B cell (primary cell): ENCODE measurements at regions of chr10 and their contacts with region 1.

Region 1: DNA sequence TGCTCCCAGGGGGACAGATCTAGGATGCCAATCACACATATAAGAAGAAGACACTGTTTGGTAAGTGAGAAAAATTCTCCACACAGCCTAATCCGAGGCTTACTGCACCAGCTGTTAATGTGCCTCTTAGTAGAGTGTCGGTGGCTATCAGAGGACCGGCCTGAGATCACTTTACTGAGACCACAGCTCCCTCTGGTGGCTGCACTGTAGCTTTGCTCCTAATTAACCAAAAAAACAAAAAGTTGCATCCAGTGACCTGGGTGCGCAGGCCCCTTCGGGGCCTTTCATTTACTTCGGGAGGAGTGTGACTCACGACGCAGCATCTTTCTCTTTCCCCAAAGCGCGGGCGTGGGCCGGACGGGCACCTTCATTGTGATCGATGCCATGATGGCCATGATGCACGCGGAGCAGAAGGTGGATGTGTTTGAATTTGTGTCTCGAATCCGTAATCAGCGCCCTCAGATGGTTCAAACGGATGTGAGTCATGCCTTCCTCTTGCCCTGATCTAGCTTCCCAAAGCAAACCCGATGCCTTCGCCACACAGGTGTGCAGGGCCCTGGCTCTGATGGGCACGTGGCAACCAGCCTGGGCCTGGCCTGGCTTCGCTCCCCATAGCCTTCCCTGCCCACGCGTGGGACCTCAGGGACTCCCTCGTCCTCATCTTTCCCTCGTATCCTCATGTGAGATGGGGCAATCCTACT is 56.7 kb downstream of the MKI67 start:
- DNase-seq: peak; percentile 88
- ATAC-seq: no peak
- H3K4me3 ChIP-seq: no peak overlapping the region
- H3K4me3 Mint-ChIP-seq: no peak overlapping the region
- H3K27ac ChIP-seq: no peak overlapping the region
- H3K27ac Mint-ChIP-seq: peak overlapping the region; percentile 34
- H3K4me1 ChIP-seq: peaks cover 19 to 33% of the 10 kb centered on the region in 2 donors
- H3K4me1 Mint-ChIP-seq: peaks cover 33% of the 10 kb centered on the region
- H3K27me3 ChIP-seq: no peaks in the 10 kb centered on the region
- H3K27me3 Mint-ChIP-seq: no peaks in the 10 kb centered on the region
- CTCF ChIP-seq: peak; percentile 91

Region 2: GRCh38 chr10:127715782-127716378 is 353.6 kb before region 1 on chr10:
- CTCF ChIA-PET with region 1: interaction called, 25 read pairs
- POLR2A ChIA-PET with region 1: no interaction called
- intact Hi-C with region 1: loop called (anchors 2 kb)
- DNase-seq: peak; percentile 47
- ATAC-seq: no peak
- H3K4me3 ChIP-seq: no peak overlapping the region
- H3K4me3 Mint-ChIP-seq: no peak overlapping the region
- H3K27ac ChIP-seq: no peak overlapping the region
- H3K27ac Mint-ChIP-seq: no peak overlapping the region
- H3K4me1 ChIP-seq: no peaks in the 10 kb centered on the region
- H3K4me1 Mint-ChIP-seq: no peaks in the 10 kb centered on the region
- H3K27me3 ChIP-seq: no peaks in the 10 kb centered on the region
- H3K27me3 Mint-ChIP-seq: peaks cover 15% of the 10 kb centered on the region
- CTCF ChIP-seq: peak; percentile 58

Region 3: GRCh38 chr10:127906548-127907377 is 162.7 kb before region 1 on chr10 and contains the start of gene PTPRE:
- CTCF ChIA-PET with region 1: interaction called, 56 read pairs
- POLR2A ChIA-PET with region 1: no interaction called
- intact Hi-C with region 1: loop called (anchors 1 kb)
- DNase-seq: peak; percentile 78
- ATAC-seq: peak; percentile 95
- H3K4me3 ChIP-seq: peak within 1 kb of the TSS in 3 of 5 experiments; percentile 42 to 62 (median 49)
- H3K4me3 Mint-ChIP-seq: peak within 1 kb of the TSS; percentile 49
- H3K27ac ChIP-seq: no peak within 1 kb of the TSS
- H3K27ac Mint-ChIP-seq: no peak within 1 kb of the TSS
- H3K4me1 ChIP-seq: peaks cover 8 to 9% of the 10 kb centered on the region in 2 donors
- H3K4me1 Mint-ChIP-seq: no peaks in the 10 kb centered on the region
- H3K27me3 ChIP-seq: peaks cover 0 to 30% (median 12%) of the 10 kb centered on the region in 4 experiments
- H3K27me3 Mint-ChIP-seq: peaks cover 57% of the 10 kb centered on the region
- CTCF ChIP-seq: peak; percentile 74
- total RNA-seq, gene PTPRE: 31.5 and 32.7 TPM in 2 replicates

Region 4: GRCh38 chr10:128011175-128011979 is 58.1 kb before region 1 on chr10:
- CTCF ChIA-PET with region 1: interaction called, 55 read pairs
- POLR2A ChIA-PET with region 1: no interaction called
- intact Hi-C with region 1: loop called (anchors 1 kb)
- DNase-seq: peak; percentile 90
- ATAC-seq: peak; percentile 99
- H3K4me3 ChIP-seq: no peak overlapping the region
- H3K4me3 Mint-ChIP-seq: peak overlapping the region; percentile 58
- H3K27ac ChIP-seq: no peak overlapping the region
- H3K27ac Mint-ChIP-seq: peak overlapping the region; percentile 54
- H3K4me1 ChIP-seq: peaks cover 4 to 10% of the 10 kb centered on the region in 2 donors
- H3K4me1 Mint-ChIP-seq: peaks cover 10% of the 10 kb centered on the region
- H3K27me3 ChIP-seq: peaks cover 0 to 14% (median 0%) of the 10 kb centered on the region in 4 experiments
- H3K27me3 Mint-ChIP-seq: peaks cover 28% of the 10 kb centered on the region
- CTCF ChIP-seq: peak; percentile 97

Region 5: GRCh38 chr10:128035557-128035973 is 33.9 kb before region 1 on chr10:
- CTCF ChIA-PET with region 1: interaction called, 524 read pairs
- POLR2A ChIA-PET with region 1: interaction called, 7 read pairs
- intact Hi-C with region 1: loop called (anchors 1 kb)
- DNase-seq: peak; percentile 64
- ATAC-seq: peak; percentile 83
- H3K4me3 ChIP-seq: no peak overlapping the region
- H3K4me3 Mint-ChIP-seq: no peak overlapping the region
- H3K27ac ChIP-seq: no peak overlapping the region
- H3K27ac Mint-ChIP-seq: peak overlapping the region; percentile 41
- H3K4me1 ChIP-seq: no peaks in the 10 kb centered on the region
- H3K4me1 Mint-ChIP-seq: no peaks in the 10 kb centered on the region
- H3K27me3 ChIP-seq: no peaks in the 10 kb centered on the region
- H3K27me3 Mint-ChIP-seq: no peaks in the 10 kb centered on the region
- CTCF ChIP-seq: peak; percentile 80

Region 6: GRCh38 chr10:128125944-128126764 is 56.7 kb after region 1 on chr10 and contains the start of gene MKI67:
- CTCF ChIA-PET with region 1: interaction called, 4 read pairs
- POLR2A ChIA-PET with region 1: no interaction called
- intact Hi-C with region 1: loop called (anchors 1 kb)
- DNase-seq: peak; percentile 94
- ATAC-seq: peak; percentile 94
- H3K4me3 ChIP-seq: peak within 1 kb of the TSS; percentile 60 to 96 (median 73)
- H3K4me3 Mint-ChIP-seq: peak within 1 kb of the TSS; percentile 89
- H3K27ac ChIP-seq: peak within 1 kb of the TSS; percentile 72 to 74
- H3K27ac Mint-ChIP-seq: peak within 1 kb of the TSS; percentile 66
- H3K4me1 ChIP-seq: peaks cover 18 to 23% of the 10 kb centered on the region in 2 donors
- H3K4me1 Mint-ChIP-seq: peaks cover 29% of the 10 kb centered on the region
- H3K27me3 ChIP-seq: peaks cover 0 to 23% (median 19%) of the 10 kb centered on the region in 4 experiments
- H3K27me3 Mint-ChIP-seq: peaks cover 27% of the 10 kb centered on the region
- CTCF ChIP-seq: no peak
- total RNA-seq, gene MKI67: 0.47 and 0.58 TPM in 2 replicates

Region 7: GRCh38 chr10:128286762-128287500 is 217.4 kb after region 1 on chr10:
- CTCF ChIA-PET with region 1: no interaction called
- POLR2A ChIA-PET with region 1: no interaction called
- intact Hi-C with region 1: no loop called
- DNase-seq: no peak
- ATAC-seq: no peak
- H3K4me3 ChIP-seq: no peak overlapping the region
- H3K4me3 Mint-ChIP-seq: no peak overlapping the region
- H3K27ac ChIP-seq: no peak overlapping the region
- H3K27ac Mint-ChIP-seq: no peak overlapping the region
- H3K4me1 ChIP-seq: no peaks in the 10 kb centered on the region
- H3K4me1 Mint-ChIP-seq: no peaks in the 10 kb centered on the region
- H3K27me3 ChIP-seq: peaks cover 0 to 16% (median 0%) of the 10 kb centered on the region in 4 experiments
- H3K27me3 Mint-ChIP-seq: peaks cover 54% of the 10 kb centered on the region
- CTCF ChIP-seq: no peak